ENCODE measurements at regions of chr20 and their contacts with region 1.

Region 1: GRCh38 chr20:41095110-41095969 is 42.0 kb upstream of the PLCG1 start:
- DNase-seq: peak; percentile 27 to 76 (median 47)
- H3K4me3 ChIP-seq: no peak overlapping the region
- H3K4me3 Mint-ChIP-seq: no peak overlapping the region
- H3K27ac ChIP-seq: no peak overlapping the region
- H3K27ac Mint-ChIP-seq: peak overlapping the region in 3 of 8 donors; percentile 52 to 83 (median 55)
- H3K4me1 ChIP-seq: no peaks in the 10 kb centered on the region
- H3K4me1 Mint-ChIP-seq: peaks cover 0 to 8% (median 0%) of the 10 kb centered on the region in 3 donors
- H3K27me3 ChIP-seq: no peaks in the 10 kb centered on the region
- H3K27me3 Mint-ChIP-seq: no peaks in the 10 kb centered on the region

Region 2: GRCh38 chr20:40970201-40970600 is 125.1 kb before region 1 on chr20:
- CTCF ChIA-PET with region 1: interaction called, 45 read pairs
- POLR2A ChIA-PET with region 1: no interaction called
- DNase-seq: no peak
- H3K4me3 ChIP-seq: no peak overlapping the region
- H3K4me3 Mint-ChIP-seq: no peak overlapping the region
- H3K27ac ChIP-seq: no peak overlapping the region
- H3K27ac Mint-ChIP-seq: no peak overlapping the region
- H3K4me1 ChIP-seq: no peaks in the 10 kb centered on the region
- H3K4me1 Mint-ChIP-seq: peaks cover 7 to 10% (median 9%) of the 10 kb centered on the region in 3 donors
- H3K27me3 ChIP-seq: peaks cover 3% of the 10 kb centered on the region
- H3K27me3 Mint-ChIP-seq: peaks cover 3 to 7% of the 10 kb centered on the region in 2 donors

Region 3: GRCh38 chr20:41249406-41250281 is 154.3 kb after region 1 on chr20:
- CTCF ChIA-PET with region 1: no interaction called
- POLR2A ChIA-PET with region 1: no interaction called
- DNase-seq: no peak
- H3K4me3 ChIP-seq: no peak overlapping the region
- H3K4me3 Mint-ChIP-seq: no peak overlapping the region
- H3K27ac ChIP-seq: no peak overlapping the region
- H3K27ac Mint-ChIP-seq: no peak overlapping the region
- H3K4me1 ChIP-seq: no peaks in the 10 kb centered on the region
- H3K4me1 Mint-ChIP-seq: no peaks in the 10 kb centered on the region
- H3K27me3 ChIP-seq: no peaks in the 10 kb centered on the region
- H3K27me3 Mint-ChIP-seq: no peaks in the 10 kb centered on the region